ENCODE measurements at regions of chrX and their contacts with region 1.

Region 1: DNA sequence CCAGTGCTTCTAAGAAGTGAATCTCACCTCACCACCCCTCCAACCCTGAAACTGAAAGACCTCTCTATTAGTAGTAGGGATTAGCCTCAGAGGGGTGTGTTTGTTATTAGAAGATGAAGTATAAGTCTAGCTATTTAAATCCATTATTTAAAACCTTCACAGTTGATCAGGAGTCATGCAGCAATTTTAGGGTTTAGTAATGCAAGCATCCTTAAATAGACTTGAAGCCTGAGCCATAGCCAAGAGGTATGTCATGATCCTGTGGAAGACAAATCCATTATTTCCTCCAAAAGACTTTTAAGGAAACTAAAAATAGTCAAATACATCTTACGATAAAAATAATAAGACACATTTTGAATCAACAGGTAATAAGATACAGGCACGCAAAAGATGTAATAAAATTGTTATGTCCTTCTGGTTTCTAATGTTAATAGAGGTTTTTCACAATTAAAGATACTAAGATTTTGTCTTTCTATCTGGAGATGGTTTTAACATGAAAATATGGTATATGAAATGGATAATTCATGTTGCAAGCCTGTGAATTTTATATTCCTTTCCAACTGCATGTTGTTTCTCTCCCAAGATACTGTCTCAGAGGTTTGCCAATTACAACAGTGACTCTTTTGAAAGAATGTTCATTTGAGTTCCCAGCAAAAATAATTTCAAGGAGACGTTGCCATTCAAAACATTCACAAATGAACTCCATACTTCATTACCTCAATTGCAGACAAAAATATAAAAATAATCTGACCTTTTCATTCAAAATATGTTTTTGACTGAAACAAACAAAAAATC is 68.0 kb downstream of the LUZP4 start:
- DNase-seq: no peak
- H3K4me3 ChIP-seq: no peak overlapping the region
- H3K27ac ChIP-seq: no peak overlapping the region
- H3K4me1 ChIP-seq: no peaks in the 10 kb centered on the region
- H3K27me3 ChIP-seq: peaks cover 4% of the 10 kb centered on the region
- CTCF ChIP-seq: no peak

Region 2: DNA sequence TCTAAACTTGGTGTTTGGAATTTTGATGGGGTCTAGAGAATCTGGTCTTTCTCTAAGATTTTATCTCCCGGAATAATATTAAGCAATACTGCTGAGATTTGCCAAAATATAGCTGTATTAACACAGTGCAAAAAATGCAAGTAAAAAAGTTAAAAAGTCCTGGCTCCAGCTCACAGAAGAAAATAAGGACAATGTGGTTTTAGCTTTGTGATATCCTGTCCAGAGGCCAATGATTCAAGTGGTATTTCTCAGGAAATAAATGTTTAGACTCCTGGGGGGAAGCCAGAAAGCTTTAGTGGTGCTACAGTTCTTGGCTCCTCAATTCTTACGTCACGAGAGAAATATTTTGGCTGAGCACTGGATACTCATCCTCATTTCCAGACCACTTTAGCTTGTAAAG is 299.2 kb before region 1 on chrX:
- CTCF ChIA-PET with region 1: no interaction called
- dilution Hi-C with region 1: no loop called
- in situ Hi-C with region 1: no loop called
- intact Hi-C with region 1: no loop called
- DNase-seq: peak; percentile 41
- H3K4me3 ChIP-seq: no peak overlapping the region
- H3K27ac ChIP-seq: no peak overlapping the region
- H3K4me1 ChIP-seq: peaks cover 7% of the 10 kb centered on the region
- H3K27me3 ChIP-seq: no peaks in the 10 kb centered on the region
- CTCF ChIP-seq: no peak

Region 3: GRCh38 chrX:115393271-115393670 is 35.7 kb after region 1 on chrX:
- CTCF ChIA-PET with region 1: no interaction called
- dilution Hi-C with region 1: no loop called
- in situ Hi-C with region 1: no loop called
- intact Hi-C with region 1: no loop called
- DNase-seq: peak; percentile 76
- H3K4me3 ChIP-seq: no peak overlapping the region
- H3K27ac ChIP-seq: no peak overlapping the region
- H3K4me1 ChIP-seq: peaks cover 8% of the 10 kb centered on the region
- H3K27me3 ChIP-seq: peaks cover 5% of the 10 kb centered on the region
- CTCF ChIP-seq: no peak

Region 4: DNA sequence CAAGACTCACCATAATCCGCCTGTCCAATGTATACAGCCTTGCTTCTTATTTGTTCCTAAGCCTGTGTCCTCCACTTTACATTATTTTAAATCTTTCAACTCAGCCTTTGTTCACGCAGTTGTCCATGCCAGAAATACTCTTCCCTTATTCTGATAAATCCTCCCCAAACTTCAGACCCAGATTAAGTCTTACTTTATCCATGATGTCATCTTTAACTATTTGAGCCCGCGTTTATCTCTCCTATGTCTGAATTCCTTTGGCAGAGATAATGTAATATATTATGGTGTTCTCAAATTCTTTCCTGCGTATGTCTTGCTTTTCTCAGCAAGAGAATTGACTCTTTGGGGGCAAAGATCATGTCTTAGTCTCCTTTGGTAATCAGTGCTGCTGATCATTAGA is 61.5 kb after region 1 on chrX:
- CTCF ChIA-PET with region 1: no interaction called
- dilution Hi-C with region 1: no loop called
- in situ Hi-C with region 1: no loop called
- intact Hi-C with region 1: no loop called
- DNase-seq: no peak
- H3K4me3 ChIP-seq: no peak overlapping the region
- H3K27ac ChIP-seq: no peak overlapping the region
- H3K4me1 ChIP-seq: no peaks in the 10 kb centered on the region
- H3K27me3 ChIP-seq: peaks cover 18% of the 10 kb centered on the region
- CTCF ChIP-seq: no peak

Region 5: GRCh38 chrX:115449742-115450141 is 92.2 kb after region 1 on chrX:
- CTCF ChIA-PET with region 1: no interaction called
- dilution Hi-C with region 1: loop called (anchors 5 kb)
- in situ Hi-C with region 1: no loop called
- intact Hi-C with region 1: no loop called
- DNase-seq: no peak
- H3K4me3 ChIP-seq: no peak overlapping the region
- H3K27ac ChIP-seq: no peak overlapping the region
- H3K4me1 ChIP-seq: no peaks in the 10 kb centered on the region
- H3K27me3 ChIP-seq: peaks cover 3% of the 10 kb centered on the region
- CTCF ChIP-seq: no peak